ENCODE measurements at regions of chr1 and their contacts with region 1.

Region 1: DNA sequence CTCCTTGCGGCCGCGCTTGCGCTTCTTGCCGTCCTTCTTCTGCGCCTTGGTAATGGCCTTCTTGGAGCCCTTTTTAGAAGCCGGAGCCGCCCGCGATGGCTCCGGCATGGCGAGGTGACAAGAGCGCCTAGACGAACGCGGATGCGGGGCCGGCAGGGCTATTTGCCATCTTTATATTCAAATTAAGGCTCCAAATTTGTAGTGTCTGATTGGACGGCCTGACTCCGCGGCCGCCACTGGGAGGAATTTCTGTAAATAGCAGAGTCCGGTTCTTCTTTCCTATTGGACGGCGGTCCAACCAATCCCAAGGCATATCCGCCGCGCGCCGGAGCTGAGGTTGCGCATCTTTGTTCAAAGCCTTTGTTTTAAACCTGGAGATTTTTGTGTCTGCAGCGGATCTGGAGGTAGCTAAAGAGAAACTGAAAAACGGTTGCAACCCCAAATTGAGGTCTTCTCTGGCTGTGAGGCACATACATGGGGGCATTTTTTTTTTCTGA is 22.6 kb upstream of the RNF187 start:
- DNase-seq: peak; percentile 88
- H3K4me3 Mint-ChIP-seq: peak overlapping the region; percentile 85
- H3K27ac Mint-ChIP-seq: peak overlapping the region; percentile 88
- H3K4me1 Mint-ChIP-seq: peaks cover 61% of the 10 kb centered on the region
- H3K27me3 Mint-ChIP-seq: peaks cover 11% of the 10 kb centered on the region

Region 2: GRCh38 chr1:228139944-228140656 is 324.4 kb before region 1 on chr1 and contains the start of gene GUK1:
- intact Hi-C with region 1: loop called (anchors 1 kb)
- DNase-seq: peak; percentile 100
- H3K4me3 Mint-ChIP-seq: peak within 1 kb of the TSS; percentile 100
- H3K27ac Mint-ChIP-seq: peak within 1 kb of the TSS; percentile 97
- H3K4me1 Mint-ChIP-seq: peaks cover 22% of the 10 kb centered on the region
- H3K27me3 Mint-ChIP-seq: peaks cover 21% of the 10 kb centered on the region
- total RNA-seq, gene GUK1: 201 and 202 TPM in 2 replicates

Region 3: DNA sequence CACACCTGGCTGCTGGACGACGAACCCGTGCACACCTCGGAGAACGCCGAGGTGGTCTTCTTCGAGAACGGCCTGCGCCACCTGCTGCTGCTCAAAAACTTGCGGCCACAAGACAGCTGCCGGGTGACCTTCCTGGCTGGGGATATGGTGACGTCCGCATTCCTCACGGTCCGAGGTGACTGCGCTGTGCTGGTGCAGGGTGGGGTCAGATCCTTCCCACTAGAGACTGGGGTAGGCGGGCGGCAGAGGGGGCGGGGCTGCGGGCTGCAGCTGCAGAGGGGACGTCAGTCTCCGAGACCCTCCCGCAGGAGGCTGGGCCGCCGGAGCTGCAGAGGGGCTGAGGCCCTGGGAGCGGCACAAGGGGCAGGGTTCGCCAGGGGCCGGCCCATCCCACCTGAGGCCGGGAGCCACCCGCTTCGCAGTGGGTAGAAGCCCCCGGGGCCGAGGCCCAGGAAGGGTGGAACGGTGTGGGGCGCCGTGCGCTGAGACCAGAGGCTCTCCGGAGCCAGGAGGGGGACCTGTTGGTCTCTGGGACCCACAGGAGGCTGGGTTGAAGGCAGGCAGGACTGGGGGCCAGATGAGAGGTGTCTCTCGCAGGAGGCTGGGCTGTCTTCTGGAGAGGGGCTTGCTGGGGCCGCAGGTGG is 148.5 kb before region 1 on chr1:
- intact Hi-C with region 1: no loop called
- DNase-seq: no peak
- H3K4me3 Mint-ChIP-seq: no peak overlapping the region
- H3K27ac Mint-ChIP-seq: no peak overlapping the region
- H3K4me1 Mint-ChIP-seq: no peaks in the 10 kb centered on the region
- H3K27me3 Mint-ChIP-seq: no peaks in the 10 kb centered on the region

Region 4: GRCh38 chr1:228358039-228358763 is 106.3 kb before region 1 on chr1:
- intact Hi-C with region 1: no loop called
- DNase-seq: no peak
- H3K4me3 Mint-ChIP-seq: no peak overlapping the region
- H3K27ac Mint-ChIP-seq: no peak overlapping the region
- H3K4me1 Mint-ChIP-seq: no peaks in the 10 kb centered on the region
- H3K27me3 Mint-ChIP-seq: peaks cover 2% of the 10 kb centered on the region

Region 5: DNA sequence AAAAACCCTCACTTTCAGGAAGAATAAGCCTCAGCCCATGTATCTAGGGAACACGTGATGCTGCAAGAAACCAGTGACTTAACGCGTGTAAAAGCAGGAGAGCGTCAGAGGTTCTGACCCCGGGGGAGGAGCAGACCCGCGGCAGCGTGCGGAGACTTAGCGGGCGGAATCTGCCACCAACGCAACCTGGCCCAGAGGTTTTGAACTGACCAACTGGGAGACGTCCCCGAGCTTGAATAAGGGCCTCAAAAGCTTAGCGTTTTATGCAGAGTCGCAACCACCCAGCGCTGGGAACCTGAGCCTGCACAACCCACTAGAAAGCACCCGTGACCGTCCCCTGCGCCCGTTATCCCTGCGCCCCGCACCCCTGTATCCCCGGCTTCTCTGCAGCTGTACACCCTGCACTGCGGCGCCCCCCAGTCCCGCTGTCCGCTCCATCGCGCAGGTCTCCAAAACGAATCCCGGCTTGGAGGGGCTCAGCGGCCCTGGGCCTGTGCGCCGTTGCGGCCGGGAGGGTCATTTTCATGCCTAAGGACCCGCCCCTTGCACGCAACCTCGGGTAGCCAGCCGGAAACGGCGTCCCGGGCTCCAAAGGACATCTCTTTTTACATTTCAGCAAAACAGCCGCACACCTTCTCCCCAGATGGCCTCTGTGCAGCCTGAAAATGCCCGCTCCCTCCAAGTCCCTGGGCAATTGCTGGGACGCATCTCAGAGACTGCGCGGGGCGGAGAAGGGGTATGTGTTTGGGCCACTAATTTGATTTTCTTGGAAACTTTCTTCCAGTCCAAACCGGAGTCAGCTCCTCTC is 18.5 kb before region 1 on chr1:
- intact Hi-C with region 1: loop called (anchors 2 kb)
- DNase-seq: peak; percentile 28
- H3K4me3 Mint-ChIP-seq: peak overlapping the region; percentile 82
- H3K27ac Mint-ChIP-seq: peak overlapping the region; percentile 66
- H3K4me1 Mint-ChIP-seq: peaks cover 23% of the 10 kb centered on the region
- H3K27me3 Mint-ChIP-seq: peaks cover 26% of the 10 kb centered on the region

Region 6: GRCh38 chr1:228500901-228501871 is 36.7 kb after region 1 on chr1:
- intact Hi-C with region 1: loop called (anchors 1 kb)
- DNase-seq: peak; percentile 77
- H3K4me3 Mint-ChIP-seq: peak overlapping the region; percentile 74
- H3K27ac Mint-ChIP-seq: no peak overlapping the region
- H3K4me1 Mint-ChIP-seq: peaks cover 26% of the 10 kb centered on the region
- H3K27me3 Mint-ChIP-seq: peaks cover 7% of the 10 kb centered on the region

Region 7: DNA sequence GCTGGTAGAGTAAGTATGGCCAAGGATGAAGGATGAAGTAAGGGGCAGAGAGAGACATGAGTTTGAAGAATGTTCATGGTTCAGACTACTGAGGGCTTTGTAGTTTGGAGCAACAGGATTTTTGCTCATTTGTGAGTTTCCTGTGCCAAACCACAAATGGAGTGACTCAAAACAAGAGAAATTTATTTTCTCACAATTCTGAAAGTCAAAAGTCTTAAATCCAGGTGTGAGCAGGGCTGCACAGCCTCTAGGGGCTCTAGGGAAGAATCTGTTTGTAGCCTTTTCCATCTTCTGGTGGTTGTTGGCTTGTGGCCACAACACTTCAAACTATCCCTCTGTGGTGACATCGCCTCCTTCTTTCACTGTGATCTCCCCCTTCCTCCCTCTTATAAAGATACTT is 329.6 kb after region 1 on chr1:
- intact Hi-C with region 1: loop called (anchors 1 kb)
- DNase-seq: peak; percentile 49
- H3K4me3 Mint-ChIP-seq: no peak overlapping the region
- H3K27ac Mint-ChIP-seq: no peak overlapping the region
- H3K4me1 Mint-ChIP-seq: peaks cover 27% of the 10 kb centered on the region
- H3K27me3 Mint-ChIP-seq: no peaks in the 10 kb centered on the region

Region 8: GRCh38 chr1:229558571-229559335 is 1094.2 kb after region 1 on chr1 and contains the start of gene ABCB10:
- intact Hi-C with region 1: loop called (anchors 2 kb)
- DNase-seq: peak; percentile 81
- H3K4me3 Mint-ChIP-seq: peak within 1 kb of the TSS; percentile 90
- H3K27ac Mint-ChIP-seq: peak within 1 kb of the TSS; percentile 83
- H3K4me1 Mint-ChIP-seq: peaks cover 49% of the 10 kb centered on the region
- H3K27me3 Mint-ChIP-seq: no peaks in the 10 kb centered on the region
- total RNA-seq, gene ABCB10: 46.2 and 47.0 TPM in 2 replicates